Caco-2 (cell line): ENCODE measurements at regions of chr15 and their contacts with region 1.

Region 1: GRCh38 chr15:35444557-35445204 is 101.3 kb downstream of the DPH6 start:
- DNase-seq: peak in 1 of 2 experiments; percentile 53
- H3K4me3 ChIP-seq: no peak overlapping the region
- H3K4me3 Mint-ChIP-seq: no peak overlapping the region
- H3K27ac Mint-ChIP-seq: no peak overlapping the region
- H3K4me1 ChIP-seq: peaks cover 8% of the 10 kb centered on the region
- H3K4me1 Mint-ChIP-seq: peaks cover 6% of the 10 kb centered on the region
- H3K27me3 ChIP-seq: no peaks in the 10 kb centered on the region
- H3K27me3 Mint-ChIP-seq: no peaks in the 10 kb centered on the region
- CTCF ChIP-seq: peak; percentile 69 to 80

Region 2: DNA sequence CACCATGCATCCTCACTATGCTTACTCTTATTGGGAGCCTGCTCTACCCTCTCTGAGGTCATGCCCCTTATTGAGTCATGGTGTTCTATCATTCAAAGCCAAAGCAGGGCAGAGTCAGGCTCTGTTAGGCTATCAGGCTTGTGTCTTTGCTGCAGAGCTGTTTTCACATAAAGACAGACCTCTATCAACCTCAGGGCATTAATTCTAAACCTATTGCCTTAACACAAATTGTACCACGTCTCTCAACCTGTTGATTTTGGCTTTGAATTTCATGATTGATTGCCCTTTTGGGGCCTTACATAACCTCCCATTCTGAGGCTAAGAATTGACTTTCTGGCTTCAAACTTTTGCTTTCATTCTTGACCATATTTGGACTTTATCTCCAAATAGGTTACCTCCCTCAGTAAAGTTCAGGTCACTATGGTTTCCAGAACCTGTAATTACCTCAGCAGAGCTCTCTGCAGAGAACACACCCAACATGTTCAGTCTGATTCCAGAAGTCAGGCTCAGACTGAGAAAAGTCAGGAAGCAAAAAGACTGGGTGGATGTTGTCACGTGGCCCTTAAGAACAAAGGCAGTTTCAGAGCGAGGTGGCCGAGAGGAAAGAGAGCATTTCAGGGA is 138.2 kb before region 1 on chr15:
- CTCF ChIA-PET with region 1: interaction called, 7 read pairs
- POLR2A ChIA-PET with region 1: no interaction called
- intact Hi-C with region 1: loop called (anchors 5 kb)
- DNase-seq: peak; percentile 55 to 71
- H3K4me3 ChIP-seq: no peak overlapping the region
- H3K4me3 Mint-ChIP-seq: peak overlapping the region; percentile 51
- H3K27ac Mint-ChIP-seq: peak overlapping the region; percentile 90
- H3K4me1 ChIP-seq: peaks cover 36% of the 10 kb centered on the region
- H3K4me1 Mint-ChIP-seq: peaks cover 23% of the 10 kb centered on the region
- H3K27me3 ChIP-seq: no peaks in the 10 kb centered on the region
- H3K27me3 Mint-ChIP-seq: no peaks in the 10 kb centered on the region
- CTCF ChIP-seq: no peak

Region 3: GRCh38 chr15:35410774-35411173 is 33.9 kb before region 1 on chr15:
- CTCF ChIA-PET with region 1: no interaction called
- POLR2A ChIA-PET with region 1: no interaction called
- intact Hi-C with region 1: loop called (anchors 1 kb)
- DNase-seq: peak; percentile 52 to 58
- H3K4me3 ChIP-seq: no peak overlapping the region
- H3K4me3 Mint-ChIP-seq: no peak overlapping the region
- H3K27ac Mint-ChIP-seq: no peak overlapping the region
- H3K4me1 ChIP-seq: peaks cover 32% of the 10 kb centered on the region
- H3K4me1 Mint-ChIP-seq: peaks cover 11% of the 10 kb centered on the region
- H3K27me3 ChIP-seq: no peaks in the 10 kb centered on the region
- H3K27me3 Mint-ChIP-seq: no peaks in the 10 kb centered on the region
- CTCF ChIP-seq: no peak

Region 4: GRCh38 chr15:36791844-36792571 is 1347.3 kb after region 1 on chr15:
- CTCF ChIA-PET with region 1: no interaction called
- POLR2A ChIA-PET with region 1: no interaction called
- intact Hi-C with region 1: no loop called
- DNase-seq: no peak
- H3K4me3 ChIP-seq: no peak overlapping the region
- H3K4me3 Mint-ChIP-seq: no peak overlapping the region
- H3K27ac Mint-ChIP-seq: no peak overlapping the region
- H3K4me1 ChIP-seq: peaks cover 7% of the 10 kb centered on the region
- H3K4me1 Mint-ChIP-seq: peaks cover 8% of the 10 kb centered on the region
- H3K27me3 ChIP-seq: no peaks in the 10 kb centered on the region
- H3K27me3 Mint-ChIP-seq: no peaks in the 10 kb centered on the region
- CTCF ChIP-seq: no peak